ENCODE measurements at regions of chr3 and their contacts with region 1.

Region 1: GRCh38 chr3:126134219-126134975 is 46.0 kb downstream of the ALDH1L1 start:
- DNase-seq: peak; percentile 17
- ATAC-seq: peak; percentile 86
- H3K4me3 ChIP-seq: no peak overlapping the region
- H3K27ac ChIP-seq: no peak overlapping the region
- H3K4me1 ChIP-seq: no peaks in the 10 kb centered on the region; the same call in 1 of the 2 replicates
- H3K27me3 ChIP-seq: peaks cover 4% of the 10 kb centered on the region
- CTCF ChIP-seq: peak; percentile 91

Region 2: GRCh38 chr3:125990253-125990970 is 144.0 kb before region 1 on chr3:
- CTCF ChIA-PET with region 1: no interaction called
- POLR2A ChIA-PET with region 1: interaction called, 10 read pairs
- in situ Hi-C with region 1: no loop called
- intact Hi-C with region 1: no loop called
- DNase-seq: peak; percentile 10
- ATAC-seq: peak; percentile 100
- H3K4me3 ChIP-seq: peak overlapping the region; percentile 70 to 88
- H3K27ac ChIP-seq: peak overlapping the region; percentile 85
- H3K4me1 ChIP-seq: peaks cover 4% of the 10 kb centered on the region; the same call in 1 of the 2 replicates
- H3K27me3 ChIP-seq: peaks cover 12% of the 10 kb centered on the region; the same call in 1 of the 2 replicates
- CTCF ChIP-seq: no peak

Region 3: DNA sequence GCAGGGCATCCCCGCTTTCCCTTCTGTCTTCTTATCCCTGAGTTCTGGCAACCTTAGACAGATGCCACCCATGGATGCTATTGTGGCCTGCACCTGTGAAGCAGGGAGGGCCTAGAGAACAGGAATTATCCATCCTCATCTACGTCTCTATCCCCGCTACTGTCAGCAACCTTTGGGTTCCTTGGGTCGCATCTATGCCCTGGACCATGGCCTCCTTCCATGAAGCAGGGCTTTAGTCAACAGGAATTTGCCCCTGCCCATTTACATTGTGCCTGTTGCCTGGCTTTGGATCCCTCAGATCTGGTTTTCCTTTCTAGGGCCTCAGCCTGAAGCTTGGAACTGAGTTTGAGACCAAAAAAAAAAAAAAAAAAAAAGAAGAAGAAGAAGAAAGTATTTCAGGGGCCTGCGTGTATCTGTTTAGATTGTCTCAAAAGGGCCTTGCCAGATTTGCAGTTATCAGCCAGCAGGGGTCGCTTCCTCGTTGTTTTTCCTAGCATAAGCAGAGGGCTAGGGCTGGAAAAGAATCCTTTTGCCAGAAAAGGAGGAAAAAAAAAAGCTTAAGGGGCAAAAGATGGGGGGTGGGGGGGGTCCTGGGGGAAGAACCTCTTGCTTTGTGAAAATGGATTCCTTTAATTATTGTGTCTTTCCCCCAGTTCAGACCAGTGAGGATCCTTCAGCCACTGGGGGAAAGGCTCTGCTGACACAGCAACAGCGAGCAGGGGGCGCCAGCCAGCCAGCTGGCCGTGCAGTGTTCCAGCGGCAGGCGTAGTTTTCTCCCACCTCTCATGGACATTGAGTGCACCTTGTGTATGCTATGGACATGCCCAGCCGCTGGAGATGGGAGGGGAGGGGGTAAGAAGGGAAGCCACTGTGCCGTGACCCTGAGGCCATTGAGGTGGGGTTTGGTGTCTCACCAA is 111.7 kb after region 1 on chr3:
- CTCF ChIA-PET with region 1: no interaction called
- POLR2A ChIA-PET with region 1: no interaction called
- in situ Hi-C with region 1: no loop called
- intact Hi-C with region 1: no loop called
- DNase-seq: no peak
- ATAC-seq: no peak
- H3K4me3 ChIP-seq: no peak overlapping the region
- H3K27ac ChIP-seq: no peak overlapping the region
- H3K4me1 ChIP-seq: no peaks in the 10 kb centered on the region
- H3K27me3 ChIP-seq: peaks cover 13% of the 10 kb centered on the region
- CTCF ChIP-seq: peak; percentile 70